PC-9 (cell line): ENCODE measurements at regions of chr16 and their contacts with region 1.

Region 1: GRCh38 chr16:55701442-55702319 is 45.9 kb downstream of the SLC6A2 start:
- DNase-seq: peak; percentile 50 to 53
- H3K4me3 ChIP-seq: no peak overlapping the region
- H3K27ac ChIP-seq: no peak overlapping the region
- H3K4me1 ChIP-seq: peaks cover 10% of the 10 kb centered on the region
- H3K27me3 ChIP-seq: no peaks in the 10 kb centered on the region
- CTCF ChIP-seq: peak; percentile 86

Region 2: GRCh38 chr16:55179852-55180585 is 521.7 kb before region 1 on chr16:
- CTCF ChIA-PET with region 1: no interaction called
- POLR2A ChIA-PET with region 1: no interaction called
- intact Hi-C with region 1: no loop called
- DNase-seq: no peak
- H3K4me3 ChIP-seq: no peak overlapping the region
- H3K27ac ChIP-seq: no peak overlapping the region
- H3K4me1 ChIP-seq: no peaks in the 10 kb centered on the region
- H3K27me3 ChIP-seq: peaks cover 34% of the 10 kb centered on the region
- CTCF ChIP-seq: no peak

Region 3: GRCh38 chr16:55480228-55480661 is 221.4 kb before region 1 on chr16:
- CTCF ChIA-PET with region 1: interaction called, 10 read pairs
- POLR2A ChIA-PET with region 1: no interaction called
- intact Hi-C with region 1: no loop called
- DNase-seq: peak in 1 of 2 experiments; percentile 55
- H3K4me3 ChIP-seq: no peak overlapping the region
- H3K27ac ChIP-seq: no peak overlapping the region
- H3K4me1 ChIP-seq: peaks cover 6% of the 10 kb centered on the region; the same call in 1 of the 2 replicates
- H3K27me3 ChIP-seq: no peaks in the 10 kb centered on the region
- CTCF ChIP-seq: no peak

Region 4: DNA sequence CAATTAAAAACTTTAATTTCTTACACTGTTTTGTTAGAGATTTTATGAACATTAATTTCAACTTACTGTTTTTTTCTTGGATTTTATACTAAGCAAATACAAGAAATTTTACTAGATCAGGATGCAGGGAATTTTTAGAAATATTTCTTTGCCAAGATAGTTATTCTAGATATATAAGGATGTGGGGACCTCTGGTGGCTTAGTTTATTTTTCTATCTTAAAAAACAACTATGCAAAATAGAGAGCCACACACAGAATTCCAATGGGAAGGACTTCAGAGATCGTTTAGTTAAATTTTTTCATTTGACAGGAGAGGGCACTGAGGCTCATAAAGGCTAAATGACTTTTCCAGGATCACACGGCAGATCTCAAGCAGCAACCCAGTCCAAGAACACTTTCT is 158.2 kb before region 1 on chr16:
- CTCF ChIA-PET with region 1: interaction called, 10 read pairs
- POLR2A ChIA-PET with region 1: no interaction called
- intact Hi-C with region 1: loop called (anchors 1 kb)
- DNase-seq: peak in 1 of 2 experiments; percentile 47
- H3K4me3 ChIP-seq: no peak overlapping the region
- H3K27ac ChIP-seq: no peak overlapping the region
- H3K4me1 ChIP-seq: peaks cover 10% of the 10 kb centered on the region; the same call in 1 of the 2 replicates
- H3K27me3 ChIP-seq: no peaks in the 10 kb centered on the region
- CTCF ChIP-seq: peak; percentile 74

Region 5: GRCh38 chr16:55634193-55634592 is 67.5 kb before region 1 on chr16:
- CTCF ChIA-PET with region 1: no interaction called
- POLR2A ChIA-PET with region 1: no interaction called
- intact Hi-C with region 1: no loop called
- DNase-seq: no peak
- H3K4me3 ChIP-seq: no peak overlapping the region
- H3K27ac ChIP-seq: no peak overlapping the region
- H3K4me1 ChIP-seq: peaks cover 24% of the 10 kb centered on the region
- H3K27me3 ChIP-seq: no peaks in the 10 kb centered on the region
- CTCF ChIP-seq: no peak

Region 6: DNA sequence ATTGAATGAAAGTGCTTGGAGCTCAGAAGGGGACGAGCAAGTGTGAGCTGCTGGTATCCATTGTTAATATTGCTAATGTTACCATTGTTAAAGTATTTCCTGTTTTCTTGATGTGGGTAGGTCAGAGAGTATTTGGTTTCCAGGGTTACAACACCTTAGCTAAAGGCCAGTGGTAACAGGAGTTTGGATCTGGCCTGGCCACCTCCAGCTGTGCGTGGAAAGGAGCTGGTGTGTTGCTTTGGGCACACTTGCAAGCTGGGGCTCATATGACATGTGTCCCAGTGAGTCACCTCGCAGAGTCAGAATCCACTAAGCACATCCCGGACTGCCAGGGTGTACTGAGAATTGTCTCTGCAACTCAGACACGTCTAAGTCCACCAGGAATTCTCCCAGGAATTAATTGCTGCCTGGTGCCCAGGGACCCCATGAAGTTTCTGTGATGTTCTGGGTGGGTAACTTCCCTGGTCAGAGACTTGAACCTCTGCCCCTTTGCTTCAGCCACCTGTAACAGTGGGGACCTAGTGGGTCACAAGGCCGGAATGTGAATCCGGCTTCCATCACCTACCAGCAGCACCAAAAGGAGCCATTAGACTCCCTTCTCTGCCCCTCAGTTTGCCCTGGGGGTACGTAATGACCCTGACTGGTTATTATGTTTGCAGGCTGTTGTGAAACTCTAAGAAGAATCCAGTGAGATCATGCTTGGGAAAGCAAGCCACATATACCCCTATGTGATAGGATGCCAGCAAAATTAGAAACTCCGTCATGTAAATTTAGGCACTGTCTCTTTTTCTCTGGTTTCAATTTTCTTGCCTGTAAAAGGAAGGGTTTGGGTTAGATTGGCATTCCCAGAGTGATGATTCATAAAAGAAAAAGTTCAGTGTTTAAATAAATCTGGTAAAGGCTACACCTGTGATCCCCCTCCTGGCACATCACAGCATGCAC is 33.1 kb before region 1 on chr16:
- CTCF ChIA-PET with region 1: interaction called, 3 read pairs
- POLR2A ChIA-PET with region 1: no interaction called
- intact Hi-C with region 1: loop called (anchors 2 kb)
- DNase-seq: peak; percentile 86 to 99
- H3K4me3 ChIP-seq: peak overlapping the region; percentile 45; the same call in 1 of the 2 replicates
- H3K27ac ChIP-seq: peak overlapping the region; percentile 99
- H3K4me1 ChIP-seq: peaks cover 76% of the 10 kb centered on the region
- H3K27me3 ChIP-seq: no peaks in the 10 kb centered on the region
- CTCF ChIP-seq: no peak

Region 7: DNA sequence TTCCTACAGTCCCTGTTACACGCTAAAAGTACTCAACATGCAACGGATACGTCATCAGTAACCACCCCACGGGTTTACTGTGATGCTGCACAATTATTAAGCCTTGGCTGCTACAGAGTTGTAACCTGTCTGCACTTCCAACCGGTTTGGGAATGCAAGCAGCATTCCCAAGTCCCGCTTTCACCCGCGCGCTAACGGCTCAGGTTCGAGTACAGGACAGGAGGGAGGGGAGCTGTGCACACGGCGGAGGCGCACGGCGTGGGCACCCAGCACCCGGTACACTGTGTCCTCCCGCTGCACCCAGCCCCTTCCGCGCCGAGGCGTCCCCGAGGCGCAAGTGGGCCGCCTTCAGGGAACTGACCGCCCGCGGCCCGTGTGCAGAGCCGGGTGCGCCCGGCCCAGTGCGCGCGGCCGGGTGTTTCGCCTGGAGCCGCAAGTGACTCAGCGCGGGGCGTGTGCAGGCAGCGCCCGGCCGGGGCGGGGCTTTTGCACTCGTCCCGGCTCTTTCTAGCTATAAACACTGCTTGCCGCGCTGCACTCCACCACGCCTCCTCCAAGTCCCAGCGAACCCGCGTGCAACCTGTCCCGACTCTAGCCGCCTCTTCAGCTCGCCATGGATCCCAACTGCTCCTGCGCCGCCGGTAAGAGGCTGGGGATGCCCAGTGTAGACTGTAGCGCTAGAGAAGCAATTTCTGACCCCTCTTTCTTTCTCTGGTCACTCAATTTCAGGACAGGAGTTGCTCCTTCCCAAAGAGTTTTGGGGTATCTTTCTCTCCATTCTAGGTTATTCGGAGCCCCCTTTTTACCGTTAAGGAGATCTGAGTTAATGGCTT is 906.6 kb after region 1 on chr16 and contains the start of gene MT2A:
- CTCF ChIA-PET with region 1: no interaction called
- POLR2A ChIA-PET with region 1: no interaction called
- intact Hi-C with region 1: no loop called
- DNase-seq: peak; percentile 89 to 91
- H3K4me3 ChIP-seq: peak within 1 kb of the TSS; percentile 90
- H3K27ac ChIP-seq: peak within 1 kb of the TSS; percentile 95
- H3K4me1 ChIP-seq: peaks cover 88% of the 10 kb centered on the region
- H3K27me3 ChIP-seq: no peaks in the 10 kb centered on the region
- CTCF ChIP-seq: no peak
- total RNA-seq, gene MT2A: 203 and 353 TPM in 2 replicates

Region 8: GRCh38 chr16:57300387-57301125 is 1598.9 kb after region 1 on chr16:
- CTCF ChIA-PET with region 1: no interaction called
- POLR2A ChIA-PET with region 1: no interaction called
- intact Hi-C with region 1: no loop called
- DNase-seq: peak; percentile 96 to 98
- H3K4me3 ChIP-seq: peak overlapping the region; percentile 64; the same call in 1 of the 2 replicates
- H3K27ac ChIP-seq: peak overlapping the region; percentile 67
- H3K4me1 ChIP-seq: peaks cover 31% of the 10 kb centered on the region
- H3K27me3 ChIP-seq: no peaks in the 10 kb centered on the region
- CTCF ChIP-seq: peak; percentile 92